Activated CD4-positive, alpha-beta T cell treated with anti-CD3 and anti-CD28 coated beads for 36 hours (primary cell): ENCODE measurements at regions of chr11 and their contacts with region 1.

Region 1: DNA sequence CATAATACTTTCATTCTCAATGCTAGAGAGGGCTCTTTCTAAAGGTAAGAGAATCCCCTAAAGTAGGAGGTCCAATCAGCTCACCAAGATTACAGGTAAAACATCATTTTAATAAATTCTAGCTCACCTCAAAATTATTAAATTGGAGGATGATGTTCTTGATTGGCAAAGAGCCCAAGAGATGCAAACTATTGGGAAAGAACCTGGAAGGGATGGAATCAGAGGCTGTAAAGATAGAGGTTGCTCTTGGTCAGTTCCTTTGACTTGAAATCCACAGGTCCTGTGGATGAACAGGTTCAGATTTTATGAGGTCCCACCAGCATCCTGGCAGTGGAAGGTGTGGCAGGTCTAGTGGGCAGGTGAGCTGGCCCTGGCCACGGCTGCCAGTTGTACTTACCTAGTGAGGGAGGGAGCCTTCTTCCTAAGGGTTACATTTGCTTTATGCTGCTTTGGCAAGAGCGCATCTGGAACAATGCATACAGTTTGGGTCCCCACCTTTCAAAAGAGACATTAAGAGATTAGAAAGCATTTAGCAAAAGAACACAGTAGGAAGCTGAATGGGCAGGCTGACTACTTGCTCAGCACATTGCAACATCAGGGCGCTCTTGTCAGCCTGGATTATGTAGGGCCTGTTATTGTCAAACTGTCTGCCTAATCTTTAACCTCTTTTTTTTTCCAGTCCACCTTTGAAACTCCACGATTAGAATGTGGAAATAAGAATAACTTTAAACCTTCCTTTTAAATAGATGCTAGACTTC is 97.1 kb downstream of the RDX start:
- DNase-seq: no peak
- ATAC-seq: no peak
- H3K4me3 Mint-ChIP-seq: no peak overlapping the region
- H3K27ac Mint-ChIP-seq: no peak overlapping the region
- H3K4me1 Mint-ChIP-seq: no peaks in the 10 kb centered on the region
- H3K27me3 Mint-ChIP-seq: no peaks in the 10 kb centered on the region

Region 2: DNA sequence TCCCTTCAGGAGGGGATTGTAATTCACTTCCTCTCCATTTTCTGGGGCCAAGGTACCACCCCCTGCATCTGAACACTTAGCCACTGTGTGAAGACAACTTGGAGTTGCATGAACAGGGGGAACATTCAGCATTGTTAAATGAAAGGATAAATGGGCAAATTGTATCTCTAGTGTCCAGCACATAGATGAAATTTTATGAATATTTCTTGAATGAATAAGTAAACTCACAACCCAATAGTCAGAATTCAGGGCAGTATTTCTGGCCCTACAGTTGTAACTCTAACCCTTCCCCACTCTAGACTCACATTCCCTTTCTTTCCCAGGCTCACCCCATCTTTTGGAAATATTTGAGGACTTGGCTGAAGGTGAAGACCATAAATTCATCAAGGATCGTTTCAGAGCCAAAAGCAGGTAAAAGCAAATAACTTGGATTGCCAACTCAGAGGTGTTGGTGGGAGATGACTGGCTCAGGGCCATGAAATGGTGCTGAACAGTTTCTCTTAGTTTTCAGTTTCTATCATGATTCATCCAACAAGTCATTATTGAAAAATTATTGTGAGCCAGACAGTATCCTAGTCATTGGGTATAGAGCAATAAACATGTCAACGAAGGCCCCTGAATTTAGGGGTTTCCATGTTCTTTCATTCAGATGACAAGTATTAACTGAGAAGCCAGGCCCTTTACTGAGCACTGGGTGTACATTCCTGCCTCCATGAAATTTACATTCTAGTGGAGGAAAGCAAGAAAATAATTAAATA is 139.5 kb before region 1 on chr11:
- CTCF ChIA-PET with region 1: no interaction called
- POLR2A ChIA-PET with region 1: no interaction called
- intact Hi-C with region 1: no loop called
- DNase-seq: peak; percentile 18
- ATAC-seq: peak; percentile 83
- H3K4me3 Mint-ChIP-seq: no peak overlapping the region
- H3K27ac Mint-ChIP-seq: no peak overlapping the region
- H3K4me1 Mint-ChIP-seq: no peaks in the 10 kb centered on the region
- H3K27me3 Mint-ChIP-seq: peaks cover 10% of the 10 kb centered on the region

Region 3: GRCh38 chr11:110187731-110188130 is 11.6 kb before region 1 on chr11:
- CTCF ChIA-PET with region 1: interaction called, 10 read pairs
- POLR2A ChIA-PET with region 1: no interaction called
- intact Hi-C with region 1: no loop called
- DNase-seq: no peak
- ATAC-seq: no peak
- H3K4me3 Mint-ChIP-seq: no peak overlapping the region
- H3K27ac Mint-ChIP-seq: no peak overlapping the region
- H3K4me1 Mint-ChIP-seq: peaks cover 6% of the 10 kb centered on the region
- H3K27me3 Mint-ChIP-seq: no peaks in the 10 kb centered on the region

Region 4: DNA sequence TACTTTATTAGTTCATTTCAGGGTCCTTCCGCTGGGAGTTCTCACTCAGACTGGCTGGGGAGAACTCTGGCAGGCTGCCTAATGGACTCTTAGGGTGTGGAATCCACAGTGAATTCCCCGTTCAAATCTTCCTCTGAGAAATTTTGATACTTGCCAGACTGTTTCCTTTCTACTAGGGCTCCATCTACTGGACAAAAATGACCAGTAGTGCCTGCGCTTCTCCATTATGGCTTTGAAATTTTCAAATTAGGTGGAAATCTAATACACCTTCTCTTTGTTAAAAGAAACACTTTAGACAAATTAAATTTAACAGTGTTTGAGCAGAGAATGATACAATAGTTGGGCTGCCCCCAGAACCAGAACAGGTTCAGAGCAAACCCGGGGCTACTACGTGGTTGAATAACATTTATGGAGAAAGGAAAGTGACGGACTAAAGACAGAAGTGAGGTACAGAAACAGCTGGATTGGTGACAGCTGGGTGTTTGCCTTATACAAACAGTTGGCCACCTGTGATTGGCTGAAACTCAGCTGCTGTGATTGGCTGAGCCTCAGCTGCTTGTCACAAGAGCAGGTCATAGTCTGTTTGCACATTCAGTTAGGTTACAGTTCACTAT is 177.5 kb after region 1 on chr11:
- CTCF ChIA-PET with region 1: interaction called, 41 read pairs
- POLR2A ChIA-PET with region 1: no interaction called
- intact Hi-C with region 1: loop called (anchors 1 kb)
- DNase-seq: peak; percentile 37
- ATAC-seq: peak; percentile 10
- H3K4me3 Mint-ChIP-seq: no peak overlapping the region
- H3K27ac Mint-ChIP-seq: no peak overlapping the region
- H3K4me1 Mint-ChIP-seq: peaks cover 17% of the 10 kb centered on the region
- H3K27me3 Mint-ChIP-seq: peaks cover 3% of the 10 kb centered on the region

Region 5: DNA sequence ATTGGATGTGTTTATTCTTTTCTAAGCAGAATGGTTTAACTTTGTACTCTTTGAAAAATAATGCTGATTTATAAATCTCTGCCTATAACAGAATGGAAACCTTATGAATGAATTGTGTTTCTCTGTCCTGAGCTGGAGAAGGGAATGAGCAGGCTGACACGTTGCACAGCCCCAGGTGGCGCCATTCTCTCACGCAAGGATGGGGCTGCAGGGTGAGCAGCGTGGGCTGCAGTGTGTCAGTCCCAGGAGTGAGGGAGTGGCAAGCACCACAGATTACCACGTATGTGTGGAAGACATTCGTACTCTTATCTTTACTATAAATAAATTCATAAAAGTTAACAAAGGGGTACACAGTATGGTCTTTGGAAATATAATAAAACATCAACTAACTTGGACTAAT is 263.8 kb after region 1 on chr11:
- CTCF ChIA-PET with region 1: interaction called, 10 read pairs
- POLR2A ChIA-PET with region 1: no interaction called
- intact Hi-C with region 1: no loop called
- DNase-seq: peak; percentile 67
- ATAC-seq: no peak
- H3K4me3 Mint-ChIP-seq: no peak overlapping the region
- H3K27ac Mint-ChIP-seq: no peak overlapping the region
- H3K4me1 Mint-ChIP-seq: no peaks in the 10 kb centered on the region
- H3K27me3 Mint-ChIP-seq: no peaks in the 10 kb centered on the region

Region 6: GRCh38 chr11:110538154-110538553 is 338.8 kb after region 1 on chr11:
- CTCF ChIA-PET with region 1: no interaction called
- POLR2A ChIA-PET with region 1: no interaction called
- intact Hi-C with region 1: no loop called
- DNase-seq: no peak
- ATAC-seq: no peak
- H3K4me3 Mint-ChIP-seq: no peak overlapping the region
- H3K27ac Mint-ChIP-seq: no peak overlapping the region
- H3K4me1 Mint-ChIP-seq: no peaks in the 10 kb centered on the region
- H3K27me3 Mint-ChIP-seq: peaks cover 15% of the 10 kb centered on the region

Region 7: GRCh38 chr11:111230122-111230465 is 1030.7 kb after region 1 on chr11:
- CTCF ChIA-PET with region 1: no interaction called
- POLR2A ChIA-PET with region 1: no interaction called
- intact Hi-C with region 1: loop called in 1 of 2 experiments (anchors 5 kb)
- DNase-seq: peak; percentile 10
- ATAC-seq: peak; percentile 73
- H3K4me3 Mint-ChIP-seq: no peak overlapping the region
- H3K27ac Mint-ChIP-seq: no peak overlapping the region
- H3K4me1 Mint-ChIP-seq: peaks cover 9% of the 10 kb centered on the region
- H3K27me3 Mint-ChIP-seq: peaks cover 17% of the 10 kb centered on the region